ENCODE measurements at regions of chr6 and their contacts with region 1.

Region 1: DNA sequence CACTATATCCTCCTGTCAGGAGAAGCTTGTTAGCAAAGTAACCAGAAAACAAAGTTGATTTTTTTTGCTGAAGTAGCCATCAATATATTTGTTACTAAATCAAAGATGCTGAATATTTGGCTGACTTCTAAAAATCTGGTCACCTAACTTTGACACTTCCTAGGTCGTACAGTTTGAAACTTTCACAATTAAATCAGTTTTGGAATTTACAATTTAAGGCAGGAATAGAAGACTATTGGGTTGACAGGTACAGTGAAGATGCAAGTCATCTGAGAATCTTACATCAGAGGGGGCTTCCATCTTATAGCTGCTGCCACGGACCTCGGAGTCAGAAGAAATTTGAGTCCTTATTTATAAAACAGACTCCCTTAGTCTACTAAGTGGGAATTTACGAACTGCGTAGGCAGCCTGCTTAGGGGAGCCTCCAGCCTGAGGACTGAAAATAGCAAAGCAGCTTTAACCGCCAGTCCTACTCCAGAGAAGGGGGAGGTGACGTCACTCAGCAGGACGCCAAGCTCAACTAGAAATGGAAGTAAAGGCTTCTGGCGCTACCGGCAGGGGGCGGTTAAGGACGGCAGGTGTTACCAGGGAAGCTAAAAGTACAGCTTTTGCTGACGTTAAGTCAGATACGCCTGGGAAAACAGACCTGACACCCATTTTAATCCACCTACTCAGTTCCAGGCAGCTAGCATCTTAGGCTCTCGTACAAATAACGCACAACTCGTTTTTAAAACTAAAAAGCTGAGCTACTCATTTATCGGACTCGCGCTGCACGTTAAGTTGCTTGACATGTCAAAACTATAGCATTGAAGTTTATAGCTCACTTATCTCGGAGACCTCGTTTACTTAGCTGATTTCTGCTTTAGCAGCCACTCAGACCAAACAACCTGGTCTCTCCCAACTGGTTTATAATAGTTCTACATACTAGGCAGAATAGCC is 61.1 kb upstream of the HFE start:
- DNase-seq: peak; percentile 98
- H3K4me3 Mint-ChIP-seq: peak overlapping the region; percentile 87
- H3K27ac Mint-ChIP-seq: peak overlapping the region; percentile 99
- H3K4me1 Mint-ChIP-seq: peaks cover 31% of the 10 kb centered on the region
- H3K27me3 Mint-ChIP-seq: no peaks in the 10 kb centered on the region

Region 2: GRCh38 chr6:25962149-25963127 is 63.7 kb before region 1 on chr6 and contains the start of gene TRIM38:
- CTCF ChIA-PET with region 1: interaction called, 4 read pairs
- intact Hi-C with region 1: loop called (anchors 1 kb)
- DNase-seq: peak; percentile 91
- H3K4me3 Mint-ChIP-seq: peak within 1 kb of the TSS; percentile 99
- H3K27ac Mint-ChIP-seq: peak within 1 kb of the TSS; percentile 99
- H3K4me1 Mint-ChIP-seq: peaks cover 76% of the 10 kb centered on the region
- H3K27me3 Mint-ChIP-seq: no peaks in the 10 kb centered on the region
- total RNA-seq, gene TRIM38: 19.1 to 19.7 TPM

Region 3: GRCh38 chr6:26045065-26045927 is 19.1 kb after region 1 on chr6:
- CTCF ChIA-PET with region 1: interaction called, 15 read pairs
- intact Hi-C with region 1: loop called (anchors 1 kb)
- DNase-seq: peak; percentile 84
- H3K4me3 Mint-ChIP-seq: peak overlapping the region; percentile 83
- H3K27ac Mint-ChIP-seq: peak overlapping the region; percentile 99
- H3K4me1 Mint-ChIP-seq: peaks cover 13% of the 10 kb centered on the region
- H3K27me3 Mint-ChIP-seq: no peaks in the 10 kb centered on the region

Region 4: GRCh38 chr6:26054857-26055669 is 28.9 kb after region 1 on chr6:
- CTCF ChIA-PET with region 1: interaction called, 4 read pairs
- intact Hi-C with region 1: loop called (anchors 1 kb)
- DNase-seq: peak; percentile 95
- H3K4me3 Mint-ChIP-seq: peak overlapping the region; percentile 97
- H3K27ac Mint-ChIP-seq: peak overlapping the region; percentile 100
- H3K4me1 Mint-ChIP-seq: peaks cover 18% of the 10 kb centered on the region
- H3K27me3 Mint-ChIP-seq: peaks cover 11% of the 10 kb centered on the region

Region 5: DNA sequence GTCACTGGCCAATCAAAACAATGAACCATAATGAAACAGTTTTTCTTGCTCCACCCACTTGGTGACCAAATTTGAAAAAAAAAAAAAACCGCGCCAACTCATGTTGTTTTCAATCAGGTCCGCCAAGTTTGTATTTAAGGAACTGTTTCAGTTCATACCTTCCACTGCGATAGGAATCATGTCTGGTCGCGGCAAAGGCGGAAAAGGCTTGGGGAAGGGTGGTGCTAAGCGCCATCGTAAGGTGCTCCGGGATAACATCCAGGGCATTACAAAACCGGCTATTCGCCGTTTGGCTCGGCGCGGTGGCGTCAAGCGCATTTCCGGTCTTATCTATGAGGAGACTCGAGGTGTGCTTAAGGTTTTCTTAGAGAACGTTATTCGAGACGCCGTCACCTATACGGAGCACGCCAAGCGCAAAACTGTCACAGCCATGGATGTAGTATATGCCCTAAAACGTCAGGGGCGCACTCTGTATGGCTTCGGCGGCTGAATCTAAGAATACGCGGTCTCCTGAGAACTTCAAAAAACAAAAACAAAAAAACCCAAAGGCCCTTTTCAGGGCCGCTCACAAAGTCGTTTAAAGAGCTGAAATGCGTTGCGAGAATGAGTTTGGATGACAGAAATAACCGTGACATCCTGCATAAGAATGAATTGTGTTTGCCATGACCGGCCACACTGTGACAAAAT is 77.8 kb after region 1 on chr6:
- CTCF ChIA-PET with region 1: interaction called, 4 read pairs
- intact Hi-C with region 1: loop called (anchors 1 kb)
- DNase-seq: peak; percentile 87
- H3K4me3 Mint-ChIP-seq: peak overlapping the region; percentile 80
- H3K27ac Mint-ChIP-seq: peak overlapping the region; percentile 94
- H3K4me1 Mint-ChIP-seq: peaks cover 18% of the 10 kb centered on the region
- H3K27me3 Mint-ChIP-seq: peaks cover 2% of the 10 kb centered on the region

Region 6: GRCh38 chr6:26196846-26197648 is 170.9 kb after region 1 on chr6:
- CTCF ChIA-PET with region 1: no interaction called
- intact Hi-C with region 1: loop called (anchors 2 kb)
- DNase-seq: peak; percentile 86
- H3K4me3 Mint-ChIP-seq: peak overlapping the region; percentile 96
- H3K27ac Mint-ChIP-seq: peak overlapping the region; percentile 99
- H3K4me1 Mint-ChIP-seq: peaks cover 36% of the 10 kb centered on the region
- H3K27me3 Mint-ChIP-seq: peaks cover 5% of the 10 kb centered on the region